Colonic mucosa (tissue), 4 donors: ENCODE measurements at regions of chr16 and their contacts with region 1.

Region 1: DNA sequence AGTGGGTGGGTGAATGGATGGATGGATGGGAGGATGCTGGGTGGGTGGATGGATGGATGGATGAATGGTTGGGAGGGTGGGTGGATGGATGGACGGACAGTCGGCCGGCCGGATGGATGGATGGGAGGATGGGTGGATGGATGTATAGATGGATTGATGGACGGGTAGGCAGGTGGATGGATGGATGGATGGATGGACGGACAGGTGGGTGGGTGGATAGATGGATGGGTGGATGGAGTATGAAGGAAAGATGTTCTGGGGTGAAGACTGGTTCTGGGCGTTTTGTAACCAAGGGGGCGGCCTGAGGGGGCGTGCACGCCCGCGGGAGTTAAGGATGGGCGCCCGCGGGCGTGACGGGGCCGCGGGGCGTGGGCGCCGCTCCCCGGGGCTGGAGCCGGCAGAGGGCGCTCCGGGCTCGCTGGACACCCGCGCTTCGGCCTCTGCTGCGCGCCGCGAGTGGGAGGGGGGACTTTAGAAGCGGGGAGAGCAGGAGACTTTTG is at the start of gene NECAB2:
- DNase-seq: no peak
- H3K4me3 ChIP-seq: peak within 1 kb of the TSS; percentile 22
- H3K27ac ChIP-seq: no peak within 1 kb of the TSS
- H3K4me1 ChIP-seq: no peaks in the 10 kb centered on the region
- H3K27me3 ChIP-seq: peaks cover 13% of the 10 kb centered on the region
- CTCF ChIP-seq: peak; percentile 44
- total RNA-seq, gene NECAB2: 0.25 to 0.42 TPM

Region 2: GRCh38 chr16:83994087-83994486 is 26.2 kb after region 1 on chr16:
- intact Hi-C with region 1: no loop called
- DNase-seq: no peak
- H3K4me3 ChIP-seq: no peak overlapping the region
- H3K27ac ChIP-seq: no peak overlapping the region
- H3K4me1 ChIP-seq: no peaks in the 10 kb centered on the region
- H3K27me3 ChIP-seq: peaks cover 7% of the 10 kb centered on the region
- CTCF ChIP-seq: no peak

Region 3: DNA sequence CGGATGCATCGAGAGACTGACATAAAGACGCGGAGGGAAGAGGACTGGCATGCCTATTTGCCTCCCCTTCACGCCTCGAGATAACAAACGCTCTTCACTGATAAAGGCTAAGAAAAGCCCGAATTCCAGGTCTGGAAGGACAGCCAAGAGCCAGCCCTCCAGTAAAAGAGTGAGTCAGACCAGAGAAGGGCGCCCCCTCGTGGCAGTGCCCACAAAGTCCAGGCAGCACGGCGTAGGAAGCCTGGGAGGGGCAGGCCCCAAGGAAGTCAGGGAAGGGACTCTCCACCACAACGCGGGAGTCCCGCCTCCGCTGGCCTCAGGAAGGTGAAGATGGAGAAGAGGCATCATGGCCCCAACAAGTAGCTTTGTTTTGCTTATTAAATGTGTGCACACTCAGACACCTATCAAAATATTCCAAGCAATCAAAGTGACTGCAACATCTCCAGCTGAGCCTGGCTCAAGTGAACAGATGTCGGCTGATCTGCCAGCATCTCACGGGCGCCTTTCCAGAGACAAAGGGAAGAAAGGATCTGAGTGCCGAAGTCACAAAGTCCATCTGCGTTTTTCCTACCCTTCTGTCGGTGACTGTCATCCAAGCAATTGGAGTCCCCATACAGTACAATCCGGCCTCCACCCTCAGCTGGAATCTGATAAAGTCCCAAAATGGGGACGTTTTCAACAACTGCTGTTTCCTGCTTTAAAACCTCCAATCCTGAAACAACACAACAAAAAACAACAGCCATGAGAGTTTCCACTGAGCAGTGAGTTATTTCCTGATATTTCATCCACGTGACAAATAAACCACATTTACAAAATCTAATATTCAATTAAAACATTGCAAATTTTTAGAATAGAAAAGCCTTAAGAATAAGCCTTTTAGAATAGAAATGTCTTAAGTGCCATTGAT is 95.1 kb after region 1 on chr16:
- intact Hi-C with region 1: loop called (anchors 5 kb)
- DNase-seq: peak; percentile 69
- H3K4me3 ChIP-seq: no peak overlapping the region
- H3K27ac ChIP-seq: no peak overlapping the region
- H3K4me1 ChIP-seq: no peaks in the 10 kb centered on the region
- H3K27me3 ChIP-seq: no peaks in the 10 kb centered on the region
- CTCF ChIP-seq: peak; percentile 89

Region 4: DNA sequence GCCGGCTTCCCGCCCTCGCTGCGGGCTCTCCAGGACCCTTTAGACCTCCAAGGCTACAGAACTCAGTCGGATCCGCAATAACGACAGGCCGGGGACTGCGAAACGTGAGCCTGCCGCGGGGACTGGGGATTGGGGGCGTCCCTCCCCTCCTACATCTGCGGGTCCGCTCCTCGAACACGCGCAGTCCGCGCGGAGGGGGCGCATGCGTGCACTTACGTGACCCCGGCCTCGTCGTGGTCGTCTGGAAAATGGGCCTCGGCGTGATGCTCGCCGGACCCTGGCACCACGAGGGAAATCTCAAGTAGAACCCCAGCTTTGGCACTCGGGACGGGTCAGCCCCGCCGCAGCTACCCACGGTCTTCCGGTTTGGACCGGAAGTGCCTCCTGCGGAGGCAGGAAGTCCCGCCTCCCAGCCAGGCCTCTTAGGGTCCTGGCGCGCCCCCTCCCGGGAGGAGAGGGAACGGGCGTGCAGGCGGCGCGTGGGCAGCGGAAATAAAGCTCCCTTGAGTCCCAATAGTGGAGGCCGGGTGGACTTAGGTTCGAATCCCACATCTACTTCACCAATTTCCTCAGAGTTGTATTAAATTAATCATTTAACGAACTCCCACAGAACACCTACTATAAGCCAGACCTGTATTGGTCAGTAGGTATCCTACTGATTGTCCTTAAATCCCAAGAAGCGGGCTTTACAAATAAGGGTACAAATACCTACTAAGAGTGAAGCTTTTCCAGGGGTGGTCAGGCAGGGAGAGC is 219.0 kb after region 1 on chr16 and contains the start of gene TAF1C:
- intact Hi-C with region 1: loop called (anchors 10 kb)
- DNase-seq: peak; percentile 92
- H3K4me3 ChIP-seq: peak within 1 kb of the TSS; percentile 88
- H3K27ac ChIP-seq: peak within 1 kb of the TSS; percentile 49
- H3K4me1 ChIP-seq: no peaks in the 10 kb centered on the region
- H3K27me3 ChIP-seq: no peaks in the 10 kb centered on the region
- CTCF ChIP-seq: peak; percentile 94
- total RNA-seq, gene TAF1C: 17.2 to 45.6 TPM